ENCODE measurements at regions of chr11 and their contacts with region 1.

Region 1: DNA sequence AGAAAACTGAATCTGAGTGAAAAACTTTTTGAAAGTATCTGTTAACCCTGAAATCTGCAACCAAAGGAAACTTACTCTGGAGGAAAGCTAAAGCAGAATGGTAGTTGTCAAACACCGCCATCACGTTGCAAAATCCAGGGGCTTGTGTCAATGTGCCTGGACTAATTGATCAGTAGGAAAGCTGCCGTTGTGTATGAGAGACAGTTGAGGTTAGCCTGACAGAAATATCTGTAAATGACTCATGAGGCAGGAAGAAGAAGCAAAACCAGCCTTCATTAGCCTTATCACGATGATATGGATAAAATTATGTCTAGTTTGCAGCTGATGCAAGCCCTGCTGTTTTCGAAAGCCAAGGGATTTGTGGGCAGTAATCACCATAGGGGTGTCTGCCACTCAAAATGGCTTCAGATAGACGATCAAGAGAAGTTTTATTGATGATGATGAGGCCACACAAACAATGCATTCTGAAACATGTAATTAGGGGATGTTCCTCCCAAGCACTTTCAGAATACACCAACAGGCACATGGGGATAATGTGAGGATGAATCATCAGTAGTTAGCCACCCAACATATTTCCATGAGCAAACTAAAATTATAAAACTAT is 8.9 kb downstream of the SCGB1A1 start:
- DNase-seq: peak; percentile 35
- ATAC-seq: no peak
- H3K4me3 ChIP-seq: no peak overlapping the region
- H3K27ac ChIP-seq: peak overlapping the region; percentile 35
- H3K4me1 ChIP-seq: peaks cover 41% of the 10 kb centered on the region
- H3K27me3 ChIP-seq: no peaks in the 10 kb centered on the region
- CTCF ChIP-seq: no peak

Region 2: DNA sequence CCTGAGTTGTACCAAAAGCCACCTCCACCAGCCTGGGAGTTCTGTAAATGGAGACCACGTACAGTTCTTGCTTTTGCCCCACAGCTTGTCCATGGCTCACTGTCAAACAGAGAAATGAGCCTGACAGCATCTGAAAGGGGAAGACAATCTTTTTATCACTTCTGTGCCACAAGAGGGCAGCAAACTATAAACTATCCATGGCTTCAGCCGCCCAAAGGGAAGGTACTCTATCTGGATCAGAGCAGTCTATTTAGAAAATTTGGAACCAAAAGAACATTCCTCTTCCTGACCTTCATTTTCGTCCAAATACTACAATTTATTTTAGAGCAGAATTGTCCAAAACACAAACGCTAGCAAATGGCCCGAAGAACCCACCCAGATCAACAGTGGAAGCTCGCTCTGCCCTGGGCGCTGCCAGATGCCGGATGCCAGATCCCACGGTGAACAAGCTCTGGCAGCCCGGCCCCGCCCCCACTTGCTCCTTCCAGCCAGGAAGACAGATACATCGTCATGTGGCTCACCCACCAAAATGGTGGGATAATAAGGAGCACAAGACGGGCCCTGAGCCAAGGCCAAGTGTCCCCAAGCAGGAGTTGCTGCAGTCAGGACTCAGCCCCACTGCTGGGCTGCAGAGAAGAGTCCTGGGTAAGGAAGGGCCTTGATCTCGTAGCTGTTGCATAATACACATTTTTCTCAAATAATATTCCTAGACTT is 32.8 kb before region 1 on chr11:
- CTCF ChIA-PET with region 1: interaction called, 15 read pairs
- POLR2A ChIA-PET with region 1: no interaction called
- intact Hi-C with region 1: loop called (anchors 1 kb)
- DNase-seq: peak; percentile 93
- ATAC-seq: peak; percentile 81
- H3K4me3 ChIP-seq: peak overlapping the region; percentile 64
- H3K27ac ChIP-seq: no peak overlapping the region
- H3K4me1 ChIP-seq: peaks cover 17% of the 10 kb centered on the region
- H3K27me3 ChIP-seq: no peaks in the 10 kb centered on the region
- CTCF ChIP-seq: peak; percentile 96

Region 3: GRCh38 chr11:62402960-62403730 is 24.6 kb before region 1 on chr11:
- CTCF ChIA-PET with region 1: no interaction called
- POLR2A ChIA-PET with region 1: interaction called, 13 read pairs
- intact Hi-C with region 1: no loop called
- DNase-seq: no peak
- ATAC-seq: no peak
- H3K4me3 ChIP-seq: no peak overlapping the region
- H3K27ac ChIP-seq: no peak overlapping the region
- H3K4me1 ChIP-seq: no peaks in the 10 kb centered on the region
- H3K27me3 ChIP-seq: no peaks in the 10 kb centered on the region
- CTCF ChIP-seq: no peak

Region 4: DNA sequence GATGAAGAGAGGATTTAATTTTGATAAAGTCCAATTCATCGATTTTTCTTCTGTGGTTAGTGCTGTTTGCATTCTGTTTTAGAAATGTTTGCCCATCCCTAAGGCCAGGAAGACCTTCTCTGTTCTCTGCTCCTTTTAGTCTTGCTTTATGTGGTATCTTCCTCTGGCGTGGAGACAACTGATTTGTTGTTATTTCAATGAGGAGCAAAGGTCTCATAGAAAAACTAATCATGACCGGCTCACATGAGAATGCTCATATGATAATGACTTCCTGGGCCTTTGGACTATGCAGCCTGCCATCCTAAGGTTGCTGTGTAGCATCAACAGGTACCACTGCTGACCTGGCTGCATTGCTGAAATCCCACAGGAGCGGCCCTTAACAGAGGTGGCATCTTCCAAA is 10.9 kb after region 1 on chr11:
- CTCF ChIA-PET with region 1: interaction called, 19 read pairs
- POLR2A ChIA-PET with region 1: no interaction called
- intact Hi-C with region 1: no loop called
- DNase-seq: no peak
- ATAC-seq: no peak
- H3K4me3 ChIP-seq: no peak overlapping the region
- H3K27ac ChIP-seq: no peak overlapping the region
- H3K4me1 ChIP-seq: peaks cover 11% of the 10 kb centered on the region
- H3K27me3 ChIP-seq: no peaks in the 10 kb centered on the region
- CTCF ChIP-seq: no peak

Region 5: DNA sequence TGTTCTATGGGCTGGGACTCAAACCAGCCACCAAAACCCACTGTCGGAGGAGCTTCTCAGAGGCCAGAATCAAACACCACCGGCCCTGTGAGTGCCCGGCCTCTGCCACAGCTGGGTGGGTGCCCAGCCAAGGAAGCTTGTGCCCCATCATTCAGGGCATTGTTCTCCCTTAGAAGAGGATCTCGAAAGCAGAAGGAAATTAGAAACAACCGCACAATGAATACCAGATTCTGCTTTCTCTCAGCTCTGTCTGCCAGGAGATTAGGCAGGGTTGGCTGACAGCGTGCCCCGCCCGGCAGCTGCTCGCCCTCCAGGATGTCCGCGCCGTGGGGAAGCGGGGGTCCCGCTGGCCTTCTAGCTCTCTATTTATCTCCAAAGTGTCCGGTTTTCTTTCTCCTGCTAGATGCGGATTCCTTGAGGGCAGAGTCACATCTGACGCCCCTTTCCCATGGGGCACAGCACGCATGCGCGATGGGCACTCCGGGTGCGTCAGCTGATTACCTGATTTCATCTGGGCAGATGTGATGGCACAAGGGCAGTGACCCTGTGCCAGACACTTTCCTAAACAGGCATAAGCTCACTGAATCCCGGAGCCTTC is 16.6 kb after region 1 on chr11:
- CTCF ChIA-PET with region 1: interaction called, 19 read pairs
- POLR2A ChIA-PET with region 1: no interaction called
- intact Hi-C with region 1: loop called (anchors 2 kb)
- DNase-seq: no peak
- ATAC-seq: no peak
- H3K4me3 ChIP-seq: no peak overlapping the region
- H3K27ac ChIP-seq: peak overlapping the region; percentile 46
- H3K4me1 ChIP-seq: peaks cover 36% of the 10 kb centered on the region
- H3K27me3 ChIP-seq: no peaks in the 10 kb centered on the region
- CTCF ChIP-seq: no peak

Region 6: DNA sequence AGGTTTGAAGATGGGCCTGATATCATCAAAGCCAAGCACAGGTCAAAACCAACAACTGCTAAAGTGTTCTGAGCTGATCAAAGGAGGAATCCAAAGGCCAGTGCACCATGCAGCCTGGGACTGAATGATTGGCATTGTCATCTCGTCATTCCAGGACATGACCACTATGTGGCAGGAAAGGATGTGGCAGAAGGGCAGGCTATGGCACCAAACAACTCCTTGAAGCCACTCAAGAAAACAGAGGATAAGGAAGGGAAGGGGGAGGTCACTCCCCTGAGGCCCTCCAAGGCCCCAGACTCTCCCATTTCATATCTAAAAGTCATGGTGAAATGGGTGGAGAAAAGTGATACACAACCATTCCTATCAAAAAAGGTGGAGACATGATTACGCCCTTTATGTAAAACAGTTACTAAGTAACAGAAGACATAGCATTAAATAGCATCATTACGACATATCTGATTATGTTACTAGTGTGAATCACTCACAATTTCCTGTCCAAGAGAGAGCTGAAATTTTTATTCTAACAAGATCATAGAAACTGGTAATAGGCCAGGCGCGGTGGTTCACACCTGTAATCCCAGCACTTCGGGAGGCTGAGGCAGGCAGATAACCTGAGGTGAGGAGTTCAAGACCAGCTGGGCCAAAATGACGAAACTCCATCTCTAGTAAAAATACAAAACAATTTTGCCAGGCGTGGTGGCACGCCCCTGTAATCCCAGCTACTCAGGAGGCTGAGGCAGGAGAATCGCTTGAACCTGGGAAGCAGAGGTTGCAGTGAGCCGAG is 69.6 kb after region 1 on chr11:
- CTCF ChIA-PET with region 1: interaction called, 15 read pairs
- POLR2A ChIA-PET with region 1: no interaction called
- intact Hi-C with region 1: loop called (anchors 1 kb)
- DNase-seq: peak; percentile 87
- ATAC-seq: peak; percentile 85
- H3K4me3 ChIP-seq: no peak overlapping the region
- H3K27ac ChIP-seq: peak overlapping the region; percentile 26
- H3K4me1 ChIP-seq: peaks cover 34% of the 10 kb centered on the region
- H3K27me3 ChIP-seq: no peaks in the 10 kb centered on the region
- CTCF ChIP-seq: peak; percentile 93

Measured in PC-3 (cell line).